ENCODE measurements at regions of chr3 and their contacts with region 1.

Region 1: GRCh38 chr3:54853573-54854404 is 74.1 kb downstream of the LRTM1 start:
- DNase-seq: peak; percentile 18
- ATAC-seq: peak; percentile 98
- H3K4me3 ChIP-seq: no peak overlapping the region
- H3K27ac ChIP-seq: no peak overlapping the region
- H3K4me1 ChIP-seq: no peaks in the 10 kb centered on the region
- H3K27me3 ChIP-seq: 0 out of 5 replicates have a peak, but pooled peaks cover 0 to 1% of the 10 kb centered on the region in 2 experiments
- CTCF ChIP-seq: peak; percentile 89
- EP300 ChIP-seq: no peak
- POLR2A ChIP-seq: no peak
- RAD21 ChIP-seq: peak; percentile 70

Region 2: DNA sequence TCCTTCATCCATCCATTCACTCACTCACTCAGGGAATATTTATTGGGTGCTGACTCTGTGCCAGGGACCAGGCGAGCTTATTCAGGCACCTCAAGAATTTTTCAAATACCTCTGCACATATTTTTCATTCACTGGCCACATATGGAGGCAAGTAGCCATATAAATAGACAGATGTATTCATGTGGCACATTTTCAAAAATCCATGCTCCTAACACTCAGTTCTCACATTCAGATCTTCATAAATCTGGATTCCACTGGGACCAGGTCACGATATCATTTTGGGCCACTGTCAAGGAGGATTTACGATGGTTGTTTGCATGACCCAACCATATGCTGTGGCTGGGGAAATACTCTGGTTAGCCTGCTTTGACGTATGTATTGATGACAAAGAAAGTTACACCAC is 315.8 kb after region 1 on chr3:
- CTCF ChIA-PET with region 1: no interaction called
- POLR2A ChIA-PET with region 1: no interaction called
- in situ Hi-C with region 1: loop called (anchors 10 kb)
- intact Hi-C with region 1: no loop called
- DNase-seq: no peak
- ATAC-seq: no peak
- H3K4me3 ChIP-seq: no peak overlapping the region
- H3K27ac ChIP-seq: no peak overlapping the region
- H3K4me1 ChIP-seq: no peaks in the 10 kb centered on the region
- H3K27me3 ChIP-seq: no peaks in the 10 kb centered on the region
- CTCF ChIP-seq: no peak
- EP300 ChIP-seq: no peak
- POLR2A ChIP-seq: no peak
- RAD21 ChIP-seq: no peak

Region 3: GRCh38 chr3:55180936-55181535 is 327.2 kb after region 1 on chr3:
- CTCF ChIA-PET with region 1: interaction called, 14 read pairs
- POLR2A ChIA-PET with region 1: no interaction called
- in situ Hi-C with region 1: loop called (anchors 10 kb)
- intact Hi-C with region 1: no loop called
- DNase-seq: peak; percentile 11
- ATAC-seq: no peak
- H3K4me3 ChIP-seq: no peak overlapping the region
- H3K27ac ChIP-seq: no peak overlapping the region
- H3K4me1 ChIP-seq: no peaks in the 10 kb centered on the region
- H3K27me3 ChIP-seq: no peaks in the 10 kb centered on the region; a peak in 1 of 5 replicates
- CTCF ChIP-seq: peak; percentile 44
- EP300 ChIP-seq: no peak
- POLR2A ChIP-seq: no peak
- RAD21 ChIP-seq: no peak

Region 4: DNA sequence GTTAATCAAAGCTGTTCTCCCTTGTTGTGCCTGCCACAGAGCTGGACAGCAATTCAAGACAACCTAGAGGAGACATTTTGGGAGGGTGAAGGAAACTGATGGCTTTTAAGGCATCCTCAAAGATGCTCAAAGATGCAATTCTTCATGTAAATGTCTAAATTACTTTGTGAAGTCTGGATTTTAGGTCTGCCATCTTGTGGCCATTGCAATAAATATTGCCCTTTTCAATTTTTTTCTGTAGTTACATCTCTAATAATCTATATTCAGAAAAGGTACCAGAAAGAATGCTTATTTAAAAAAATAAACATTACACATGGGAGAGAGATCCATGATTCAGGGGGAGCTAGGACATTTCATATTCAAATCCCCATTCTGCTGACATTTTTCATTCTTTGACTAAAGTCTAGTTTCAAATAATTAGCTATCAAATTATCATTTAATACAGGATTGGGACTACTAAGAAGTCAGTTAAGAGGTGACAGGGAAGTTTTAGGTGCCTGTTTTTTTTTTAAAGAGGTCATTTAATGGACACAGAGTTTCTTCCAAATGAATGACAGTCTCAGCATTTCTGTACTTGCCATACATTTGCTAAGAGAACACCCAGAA is 893.1 kb after region 1 on chr3:
- CTCF ChIA-PET with region 1: no interaction called
- POLR2A ChIA-PET with region 1: no interaction called
- in situ Hi-C with region 1: loop called (anchors 25 kb)
- intact Hi-C with region 1: loop called (anchors 2 kb)
- DNase-seq: no peak
- ATAC-seq: no peak
- H3K4me3 ChIP-seq: no peak overlapping the region
- H3K27ac ChIP-seq: no peak overlapping the region
- H3K4me1 ChIP-seq: no peaks in the 10 kb centered on the region
- H3K27me3 ChIP-seq: no peaks in the 10 kb centered on the region
- CTCF ChIP-seq: no peak
- EP300 ChIP-seq: no peak
- POLR2A ChIP-seq: no peak
- RAD21 ChIP-seq: no peak

Region 5: GRCh38 chr3:55899887-55900286 is 1046.1 kb after region 1 on chr3:
- CTCF ChIA-PET with region 1: no interaction called
- POLR2A ChIA-PET with region 1: no interaction called
- in situ Hi-C with region 1: loop called (anchors 25 kb)
- intact Hi-C with region 1: no loop called
- DNase-seq: peak; percentile 14
- ATAC-seq: peak; percentile 54; the same call in 1 of the 3 replicates
- H3K4me3 ChIP-seq: no peak overlapping the region
- H3K27ac ChIP-seq: no peak overlapping the region
- H3K4me1 ChIP-seq: no peaks in the 10 kb centered on the region
- H3K27me3 ChIP-seq: no peaks in the 10 kb centered on the region; a peak in 1 of 5 replicates
- CTCF ChIP-seq: peak; percentile 30
- EP300 ChIP-seq: no peak
- POLR2A ChIP-seq: no peak
- RAD21 ChIP-seq: no peak

Region 6: DNA sequence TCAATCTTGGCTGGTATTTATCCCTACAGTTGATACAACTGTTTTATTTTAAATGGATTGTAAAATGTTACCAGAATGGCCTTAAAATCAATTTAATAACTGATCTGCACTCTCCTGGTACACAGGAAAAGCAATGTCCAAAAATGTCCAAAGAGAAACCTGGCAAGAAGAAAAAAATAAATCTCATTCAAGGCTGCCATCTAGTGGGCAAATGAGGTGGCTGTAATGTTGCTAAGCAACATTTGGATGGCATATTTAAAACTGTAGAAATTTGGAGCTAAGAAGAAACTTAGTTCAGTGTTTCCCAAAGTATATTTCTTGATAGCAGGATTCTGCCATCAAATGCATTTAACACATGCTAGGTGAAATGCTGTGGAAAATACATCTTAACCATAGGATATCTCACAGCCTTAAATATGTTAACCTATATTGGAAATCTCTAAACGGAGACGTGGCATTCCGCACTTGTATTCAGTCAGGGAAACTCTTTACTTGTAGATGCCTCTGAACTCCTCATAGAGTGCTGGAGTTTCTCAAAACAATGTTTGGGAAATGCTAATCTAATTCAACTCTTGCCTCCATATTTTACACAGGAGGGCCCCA is 1397.7 kb after region 1 on chr3:
- CTCF ChIA-PET with region 1: interaction called, 7 read pairs
- POLR2A ChIA-PET with region 1: no interaction called
- in situ Hi-C with region 1: loop called (anchors 25 kb)
- intact Hi-C with region 1: loop called (anchors 10 kb)
- DNase-seq: peak; percentile 18
- ATAC-seq: no peak
- H3K4me3 ChIP-seq: no peak overlapping the region
- H3K27ac ChIP-seq: no peak overlapping the region
- H3K4me1 ChIP-seq: no peaks in the 10 kb centered on the region
- H3K27me3 ChIP-seq: no peaks in the 10 kb centered on the region
- CTCF ChIP-seq: peak; percentile 69
- EP300 ChIP-seq: no peak
- POLR2A ChIP-seq: no peak
- RAD21 ChIP-seq: no peak

Region 7: GRCh38 chr3:56303487-56303886 is 1449.7 kb after region 1 on chr3:
- CTCF ChIA-PET with region 1: interaction called, 3 read pairs
- POLR2A ChIA-PET with region 1: no interaction called
- in situ Hi-C with region 1: no loop called
- intact Hi-C with region 1: loop called (anchors 5 kb)
- DNase-seq: peak; percentile 32
- ATAC-seq: peak; percentile 71
- H3K4me3 ChIP-seq: no peak overlapping the region
- H3K27ac ChIP-seq: no peak overlapping the region
- H3K4me1 ChIP-seq: no peaks in the 10 kb centered on the region
- H3K27me3 ChIP-seq: no peaks in the 10 kb centered on the region
- CTCF ChIP-seq: peak; percentile 58
- EP300 ChIP-seq: no peak
- POLR2A ChIP-seq: no peak
- RAD21 ChIP-seq: no peak

Measured in HepG2 (cell line).